Naive thymus-derived CD4-positive, alpha-beta T cell (primary cell): ENCODE measurements at regions of chr16 and their contacts with region 1.

Region 1: GRCh38 chr16:30407102-30407803 is at the start of gene ZNF771:
- DNase-seq: peak; percentile 66 to 93 (median 69)
- ATAC-seq: peak; percentile 93
- H3K4me3 ChIP-seq: peak within 1 kb of the TSS; percentile 85
- H3K4me3 Mint-ChIP-seq: peak within 1 kb of the TSS; percentile 87 to 100 (median 97)
- H3K27ac ChIP-seq: peak within 1 kb of the TSS; percentile 74
- H3K27ac Mint-ChIP-seq: peak within 1 kb of the TSS; percentile 83 to 97 (median 95)
- H3K4me1 ChIP-seq: peaks cover 0 to 12% of the 10 kb centered on the region in 2 donors
- H3K4me1 Mint-ChIP-seq: peaks cover 21 to 31% (median 27%) of the 10 kb centered on the region in 7 donors
- H3K27me3 ChIP-seq: no peaks in the 10 kb centered on the region
- H3K27me3 Mint-ChIP-seq: peaks cover 0 to 4% (median 0%) of the 10 kb centered on the region in 5 donors
- total RNA-seq, gene ZNF771: 1.2 to 9.0 (median 4.5) TPM

Region 2: DNA sequence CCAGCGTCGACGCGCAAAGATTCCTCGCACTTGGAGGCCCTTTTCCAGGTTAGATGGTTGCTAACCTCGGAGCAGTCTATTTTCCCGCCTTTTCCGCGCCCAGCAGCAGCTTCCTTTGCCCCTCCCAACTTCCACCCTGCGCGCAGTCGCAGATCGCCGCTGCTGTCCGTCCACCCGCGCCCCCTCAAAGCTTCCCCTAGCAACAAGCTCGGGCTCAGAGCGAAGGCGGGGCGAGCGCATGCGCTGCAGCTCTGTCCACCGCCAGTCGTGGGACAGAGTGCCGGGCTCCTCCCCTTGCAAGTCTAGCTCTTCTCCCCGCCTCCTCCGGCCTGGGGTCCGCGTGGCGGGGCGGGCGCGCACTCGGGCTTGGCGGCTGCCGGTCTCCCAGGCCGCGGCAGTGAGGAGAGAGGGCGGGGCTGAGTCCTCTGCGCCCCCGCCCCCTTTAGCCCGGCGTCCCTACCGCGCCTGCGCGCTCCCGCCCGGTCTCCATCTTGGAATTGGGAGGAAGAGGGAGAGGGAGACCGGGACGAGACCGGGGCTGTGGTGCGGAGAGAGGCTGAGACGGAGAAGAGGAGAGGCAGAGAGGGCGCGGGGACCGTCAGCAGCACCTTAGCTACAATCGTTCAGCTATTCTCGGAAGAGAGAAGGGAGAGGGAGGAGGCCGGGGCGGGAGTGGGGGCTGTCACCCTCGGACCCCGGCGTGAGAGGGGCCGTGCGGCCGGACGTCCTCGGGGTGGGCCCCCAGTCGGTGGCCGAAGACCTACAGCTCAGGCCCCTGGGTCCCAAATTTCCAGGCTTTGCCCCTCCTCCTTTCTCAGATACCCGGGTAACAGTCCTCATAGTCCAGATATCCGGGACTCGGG is 433.6 kb before region 1 on chr16 and contains the start of gene TAOK2:
- CTCF ChIA-PET with region 1: no interaction called
- POLR2A ChIA-PET with region 1: interaction called, 3 read pairs
- intact Hi-C with region 1: loop called in 1 of 2 experiments (anchors 10 kb)
- DNase-seq: peak; percentile 83 to 98 (median 89)
- ATAC-seq: peak; percentile 97
- H3K4me3 ChIP-seq: peak within 1 kb of the TSS; percentile 98
- H3K4me3 Mint-ChIP-seq: peak within 1 kb of the TSS; percentile 80 to 97 (median 94)
- H3K27ac ChIP-seq: peak within 1 kb of the TSS; percentile 78
- H3K27ac Mint-ChIP-seq: peak within 1 kb of the TSS; percentile 77 to 93 (median 91)
- H3K4me1 ChIP-seq: peaks cover 20 to 23% of the 10 kb centered on the region in 2 donors
- H3K4me1 Mint-ChIP-seq: peaks cover 23 to 39% (median 37%) of the 10 kb centered on the region in 7 donors
- H3K27me3 ChIP-seq: no peaks in the 10 kb centered on the region
- H3K27me3 Mint-ChIP-seq: no peaks in the 10 kb centered on the region
- total RNA-seq, gene TAOK2: 19.4 to 48.5 (median 42.9) TPM

Region 3: DNA sequence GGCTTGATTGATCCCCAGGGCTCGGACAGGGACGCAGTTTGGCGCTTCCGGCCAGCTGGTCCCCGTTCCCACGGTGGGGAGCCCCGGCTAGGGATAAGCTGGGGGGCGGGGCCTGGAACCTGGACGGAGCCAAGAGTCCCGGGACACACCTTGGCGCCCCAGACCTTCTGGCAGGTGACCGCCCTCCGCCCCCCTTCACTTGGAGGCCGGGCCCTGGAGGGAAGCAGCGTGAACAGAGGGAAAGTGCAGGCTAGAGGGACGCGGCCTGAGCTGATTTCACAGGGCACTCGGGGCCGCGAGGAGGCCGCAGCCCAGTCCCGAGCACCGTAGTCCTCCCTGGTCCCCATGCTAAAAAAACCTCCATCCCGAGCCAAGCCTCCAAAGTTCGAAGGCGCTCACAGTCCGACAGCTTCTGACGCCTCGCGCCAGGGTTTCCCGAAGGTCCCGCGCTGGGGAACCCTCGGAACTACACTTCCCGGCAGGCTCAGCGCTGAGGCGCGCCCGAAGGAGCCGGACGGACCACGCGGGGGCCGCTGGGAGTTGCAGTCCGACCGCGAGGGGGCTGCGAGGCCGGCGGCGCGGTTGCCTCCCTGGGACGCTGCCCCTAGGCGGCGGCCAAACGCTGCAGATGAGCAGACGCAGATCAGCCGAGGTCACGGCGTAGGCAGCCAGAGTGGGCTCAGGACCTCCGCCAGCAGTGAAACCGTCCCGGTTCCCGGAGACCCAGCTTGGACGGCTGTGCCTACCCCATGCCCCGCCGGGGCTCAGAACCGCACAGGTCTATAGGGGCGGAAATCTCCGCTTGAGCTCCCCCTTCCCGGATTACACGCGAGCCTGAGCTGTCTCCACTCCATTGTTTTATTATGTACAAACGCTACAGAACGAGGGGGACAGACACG is 315.5 kb before region 1 on chr16 and contains the start of gene TBX6:
- CTCF ChIA-PET with region 1: interaction called, 7 read pairs
- POLR2A ChIA-PET with region 1: interaction called, 9 read pairs
- intact Hi-C with region 1: loop called (anchors 2 to 10 kb)
- DNase-seq: peak; percentile 85 to 96 (median 91)
- ATAC-seq: peak; percentile 87
- H3K4me3 ChIP-seq: peak within 1 kb of the TSS; percentile 60
- H3K4me3 Mint-ChIP-seq: peak within 1 kb of the TSS; percentile 87 to 96 (median 93)
- H3K27ac ChIP-seq: peak within 1 kb of the TSS; percentile 77
- H3K27ac Mint-ChIP-seq: peak within 1 kb of the TSS; percentile 92 to 97 (median 95)
- H3K4me1 ChIP-seq: peaks cover 32 to 47% of the 10 kb centered on the region in 2 donors
- H3K4me1 Mint-ChIP-seq: peaks cover 43 to 65% (median 50%) of the 10 kb centered on the region in 7 donors
- H3K27me3 ChIP-seq: no peaks in the 10 kb centered on the region
- H3K27me3 Mint-ChIP-seq: no peaks in the 10 kb centered on the region
- total RNA-seq, gene TBX6: 1.5 to 3.3 (median 1.6) TPM

Region 4: GRCh38 chr16:30122604-30123160 is 284.6 kb before region 1 on chr16:
- CTCF ChIA-PET with region 1: no interaction called
- POLR2A ChIA-PET with region 1: no interaction called
- intact Hi-C with region 1: loop called (anchors 1 to 5 kb)
- DNase-seq: peak in 2 of 9 donors; percentile 19 to 35
- ATAC-seq: peak; percentile 2
- H3K4me3 ChIP-seq: peak overlapping the region; percentile 68
- H3K4me3 Mint-ChIP-seq: peak overlapping the region; percentile 82 to 94 (median 88)
- H3K27ac ChIP-seq: peak overlapping the region; percentile 89
- H3K27ac Mint-ChIP-seq: peak overlapping the region; percentile 75 to 93 (median 85)
- H3K4me1 ChIP-seq: peaks cover 6 to 13% of the 10 kb centered on the region in 2 donors
- H3K4me1 Mint-ChIP-seq: peaks cover 20 to 39% (median 27%) of the 10 kb centered on the region in 7 donors
- H3K27me3 ChIP-seq: no peaks in the 10 kb centered on the region
- H3K27me3 Mint-ChIP-seq: no peaks in the 10 kb centered on the region

Region 5: DNA sequence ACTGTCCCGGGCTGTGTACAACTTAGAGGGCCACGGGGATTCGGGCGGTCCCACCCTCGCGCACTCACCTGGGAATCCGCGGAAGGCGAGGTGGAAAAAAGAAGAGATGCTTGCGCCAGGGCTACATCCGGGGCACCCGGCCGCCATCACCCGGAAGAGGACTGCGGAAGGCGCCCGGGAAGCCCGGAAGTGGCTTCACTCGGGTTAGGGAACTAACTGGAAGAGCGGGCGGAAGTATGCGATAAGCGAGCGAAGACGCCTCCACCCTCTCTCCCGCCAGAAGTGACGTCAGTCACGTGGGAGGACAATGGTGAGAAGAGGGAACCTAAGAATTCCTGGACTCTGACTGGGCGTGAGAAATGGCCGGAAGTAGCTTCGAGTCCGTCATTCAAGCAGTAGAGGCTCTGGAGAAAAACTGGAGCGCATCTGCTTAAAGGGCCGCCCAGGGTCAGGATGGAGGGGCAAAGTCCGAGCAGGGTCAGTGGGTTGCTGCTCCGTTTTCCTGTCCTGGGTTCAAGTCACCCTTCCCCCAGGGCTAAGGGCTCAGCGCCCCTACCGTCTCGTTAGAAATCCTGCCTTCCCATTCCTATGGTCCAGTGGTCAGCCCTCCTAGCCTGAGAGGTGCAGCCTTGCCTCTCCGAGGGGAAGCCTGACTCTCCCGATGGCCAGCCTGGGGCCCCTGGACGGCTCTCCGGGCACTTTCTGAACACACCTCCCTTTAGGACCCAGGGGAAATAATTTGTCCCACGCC is 51.9 kb before region 1 on chr16 and contains the start of gene CD2BP2:
- CTCF ChIA-PET with region 1: interaction called, 5 read pairs
- POLR2A ChIA-PET with region 1: interaction called, 6 read pairs
- intact Hi-C with region 1: loop called (anchors 1 to 2 kb)
- DNase-seq: peak; percentile 75 to 91 (median 86)
- ATAC-seq: peak; percentile 92
- H3K4me3 ChIP-seq: peak within 1 kb of the TSS; percentile 82
- H3K4me3 Mint-ChIP-seq: peak within 1 kb of the TSS; percentile 90 to 100 (median 96)
- H3K27ac ChIP-seq: peak within 1 kb of the TSS; percentile 92
- H3K27ac Mint-ChIP-seq: peak within 1 kb of the TSS; percentile 95 to 99 (median 98)
- H3K4me1 ChIP-seq: peaks cover 16 to 18% of the 10 kb centered on the region in 2 donors
- H3K4me1 Mint-ChIP-seq: peaks cover 10 to 46% (median 28%) of the 10 kb centered on the region in 7 donors
- H3K27me3 ChIP-seq: no peaks in the 10 kb centered on the region
- H3K27me3 Mint-ChIP-seq: peaks cover 0 to 2% (median 0%) of the 10 kb centered on the region in 5 donors
- total RNA-seq, gene CD2BP2: 37.5 to 77.0 (median 64.6) TPM

Region 6: DNA sequence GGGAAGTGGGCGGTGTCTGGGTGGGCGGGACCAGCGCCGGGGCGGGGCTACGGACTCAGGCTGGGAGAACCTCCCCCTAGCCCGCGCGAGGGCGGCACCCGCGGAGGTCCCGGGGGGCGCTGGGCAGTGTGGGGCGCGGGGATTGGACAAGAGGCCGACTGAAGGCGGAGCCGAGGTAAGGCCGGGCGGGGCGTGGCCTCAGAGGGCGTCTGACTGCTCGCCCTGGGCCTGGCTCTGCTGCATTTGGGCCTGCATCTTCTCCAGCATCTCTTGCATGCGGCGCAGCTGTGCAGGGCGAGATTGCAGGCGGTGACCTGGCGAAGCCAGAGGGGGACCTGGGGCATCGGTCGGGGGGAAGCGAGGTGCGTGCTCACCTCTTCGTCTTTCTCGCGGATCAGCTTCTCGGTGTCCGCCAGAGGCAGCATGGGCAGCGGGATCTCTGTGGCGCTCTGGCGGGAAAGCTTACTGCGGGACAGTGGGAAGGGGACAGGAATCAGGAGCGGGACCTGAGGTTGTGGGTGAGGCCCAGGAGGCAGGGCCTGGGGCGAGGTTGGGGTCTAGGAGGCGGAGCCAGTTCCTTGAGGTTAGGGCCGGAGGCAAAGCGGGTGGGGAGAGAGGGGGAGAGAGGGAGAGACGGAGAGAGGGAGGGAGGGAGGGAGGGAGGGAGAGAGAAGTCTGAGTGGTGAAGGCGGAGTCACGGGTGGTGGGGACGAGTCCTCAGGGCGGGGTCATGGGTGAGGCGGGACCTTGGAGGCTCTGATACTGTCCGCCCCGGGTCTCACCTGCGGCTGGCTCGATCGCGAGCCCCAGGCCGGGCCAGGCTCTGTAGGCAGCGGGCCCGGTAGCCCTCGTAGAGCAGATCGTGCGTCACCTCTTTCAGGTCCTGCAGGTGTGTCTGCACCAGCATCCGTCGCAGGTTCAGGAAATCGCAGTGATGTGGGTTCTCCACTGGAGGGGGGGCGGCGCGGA is 28.7 kb before region 1 on chr16:
- CTCF ChIA-PET with region 1: interaction called, 5 read pairs
- POLR2A ChIA-PET with region 1: interaction called, 254 read pairs
- intact Hi-C with region 1: loop called (anchors 1 kb)
- DNase-seq: peak; percentile 97 to 99 (median 99)
- ATAC-seq: peak; percentile 91
- H3K4me3 ChIP-seq: peak overlapping the region; percentile 88
- H3K4me3 Mint-ChIP-seq: peak overlapping the region; percentile 90 to 100 (median 97)
- H3K27ac ChIP-seq: peak overlapping the region; percentile 100
- H3K27ac Mint-ChIP-seq: peak overlapping the region; percentile 98 to 100 (median 100)
- H3K4me1 ChIP-seq: peaks cover 54 to 56% of the 10 kb centered on the region in 2 donors
- H3K4me1 Mint-ChIP-seq: peaks cover 32 to 61% (median 49%) of the 10 kb centered on the region in 7 donors
- H3K27me3 ChIP-seq: no peaks in the 10 kb centered on the region
- H3K27me3 Mint-ChIP-seq: no peaks in the 10 kb centered on the region

Region 7: GRCh38 chr16:30417529-30418349 is 10.5 kb after region 1 on chr16:
- CTCF ChIA-PET with region 1: interaction called, 13 read pairs
- POLR2A ChIA-PET with region 1: interaction called, 68 read pairs
- intact Hi-C with region 1: loop called in 1 of 2 experiments (anchors 1 kb)
- DNase-seq: peak; percentile 79 to 93 (median 88)
- ATAC-seq: peak; percentile 95
- H3K4me3 ChIP-seq: peak overlapping the region; percentile 76
- H3K4me3 Mint-ChIP-seq: peak overlapping the region; percentile 54 to 80 (median 70)
- H3K27ac ChIP-seq: peak overlapping the region; percentile 85
- H3K27ac Mint-ChIP-seq: peak overlapping the region in 7 of 9 donors; percentile 69 to 88 (median 81)
- H3K4me1 ChIP-seq: peaks cover 6 to 8% of the 10 kb centered on the region in 2 donors
- H3K4me1 Mint-ChIP-seq: peaks cover 12 to 31% (median 14%) of the 10 kb centered on the region in 7 donors
- H3K27me3 ChIP-seq: no peaks in the 10 kb centered on the region
- H3K27me3 Mint-ChIP-seq: no peaks in the 10 kb centered on the region

Region 8: DNA sequence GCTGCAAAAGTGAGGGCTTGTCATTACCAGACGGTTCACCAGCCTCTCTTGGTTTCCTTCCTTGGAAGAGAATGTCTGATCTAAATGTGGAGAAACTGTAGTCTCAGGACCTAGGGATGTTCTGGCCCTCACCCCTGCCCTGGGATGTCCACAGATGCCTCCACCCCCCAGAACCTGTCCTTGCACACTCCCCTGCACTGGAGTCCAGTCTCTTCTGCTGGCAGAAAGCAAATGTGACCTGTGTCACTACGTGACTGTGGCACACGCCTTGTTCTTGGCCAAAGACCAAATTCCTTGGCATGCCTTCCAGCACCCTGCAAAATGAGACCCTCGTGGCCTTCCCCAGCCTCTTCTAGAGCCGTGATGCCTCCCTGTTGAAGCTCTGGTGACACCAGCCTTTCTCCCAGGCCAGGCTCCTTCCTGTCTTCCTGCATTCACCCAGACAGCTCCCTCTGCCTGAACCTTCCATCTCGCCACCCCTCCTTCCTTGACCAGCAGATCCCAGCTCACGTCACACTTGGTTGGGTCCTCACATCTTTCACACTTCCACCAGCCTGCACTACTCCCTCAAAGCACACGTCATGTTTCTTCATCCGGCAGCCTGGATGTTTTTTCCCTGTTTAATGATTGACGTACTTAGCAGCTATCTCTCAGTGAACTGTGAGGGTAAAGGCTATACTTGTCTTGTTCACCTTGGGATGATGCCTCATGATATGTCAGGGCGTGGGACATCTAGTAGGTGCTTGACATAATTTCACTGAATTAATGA is 114.8 kb after region 1 on chr16:
- CTCF ChIA-PET with region 1: no interaction called
- POLR2A ChIA-PET with region 1: no interaction called
- intact Hi-C with region 1: no loop called
- DNase-seq: no peak
- ATAC-seq: no peak
- H3K4me3 ChIP-seq: no peak overlapping the region
- H3K4me3 Mint-ChIP-seq: peak overlapping the region in 1 of 10 donors; percentile 35
- H3K27ac ChIP-seq: no peak overlapping the region
- H3K27ac Mint-ChIP-seq: peak overlapping the region in 4 of 9 donors; percentile 26 to 69 (median 50)
- H3K4me1 ChIP-seq: no peaks in the 10 kb centered on the region
- H3K4me1 Mint-ChIP-seq: peaks cover 0 to 25% (median 6%) of the 10 kb centered on the region in 7 donors
- H3K27me3 ChIP-seq: no peaks in the 10 kb centered on the region
- H3K27me3 Mint-ChIP-seq: no peaks in the 10 kb centered on the region